ENCODE measurements at regions of chr5 and their contacts with region 1.

Region 1: GRCh38 chr5:59810041-59810440 is 83.5 kb downstream of the PDE4D start:
- DNase-seq: peak; percentile 63 to 77 (median 76)
- ATAC-seq: peak; percentile 79
- H3K4me3 ChIP-seq: no peak overlapping the region
- H3K4me1 ChIP-seq: peaks cover 3% of the 10 kb centered on the region
- CTCF ChIP-seq: peak; percentile 80

Region 2: GRCh38 chr5:59693492-59694309 is 116.3 kb before region 1 on chr5:
- intact Hi-C with region 1: no loop called
- DNase-seq: no peak
- ATAC-seq: no peak
- H3K4me3 ChIP-seq: no peak overlapping the region
- H3K4me1 ChIP-seq: no peaks in the 10 kb centered on the region
- CTCF ChIP-seq: no peak

Region 3: GRCh38 chr5:59887274-59887673 is 77.2 kb after region 1 on chr5:
- intact Hi-C with region 1: no loop called
- DNase-seq: no peak
- ATAC-seq: no peak
- H3K4me3 ChIP-seq: no peak overlapping the region
- H3K4me1 ChIP-seq: no peaks in the 10 kb centered on the region
- CTCF ChIP-seq: no peak

Region 4: GRCh38 chr5:60586307-60586901 is 776.4 kb after region 1 on chr5:
- intact Hi-C with region 1: loop called in 1 of 2 experiments (anchors 5 kb)
- DNase-seq: peak in 1 of 3 donors; percentile 4
- ATAC-seq: no peak
- H3K4me3 ChIP-seq: no peak overlapping the region
- H3K4me1 ChIP-seq: no peaks in the 10 kb centered on the region
- CTCF ChIP-seq: no peak

Region 5: GRCh38 chr5:60668686-60669304 is 858.8 kb after region 1 on chr5:
- intact Hi-C with region 1: loop called (anchors 5 to 10 kb)
- DNase-seq: no peak
- ATAC-seq: no peak
- H3K4me3 ChIP-seq: no peak overlapping the region
- H3K4me1 ChIP-seq: peaks cover 23% of the 10 kb centered on the region
- CTCF ChIP-seq: no peak

Region 6: DNA sequence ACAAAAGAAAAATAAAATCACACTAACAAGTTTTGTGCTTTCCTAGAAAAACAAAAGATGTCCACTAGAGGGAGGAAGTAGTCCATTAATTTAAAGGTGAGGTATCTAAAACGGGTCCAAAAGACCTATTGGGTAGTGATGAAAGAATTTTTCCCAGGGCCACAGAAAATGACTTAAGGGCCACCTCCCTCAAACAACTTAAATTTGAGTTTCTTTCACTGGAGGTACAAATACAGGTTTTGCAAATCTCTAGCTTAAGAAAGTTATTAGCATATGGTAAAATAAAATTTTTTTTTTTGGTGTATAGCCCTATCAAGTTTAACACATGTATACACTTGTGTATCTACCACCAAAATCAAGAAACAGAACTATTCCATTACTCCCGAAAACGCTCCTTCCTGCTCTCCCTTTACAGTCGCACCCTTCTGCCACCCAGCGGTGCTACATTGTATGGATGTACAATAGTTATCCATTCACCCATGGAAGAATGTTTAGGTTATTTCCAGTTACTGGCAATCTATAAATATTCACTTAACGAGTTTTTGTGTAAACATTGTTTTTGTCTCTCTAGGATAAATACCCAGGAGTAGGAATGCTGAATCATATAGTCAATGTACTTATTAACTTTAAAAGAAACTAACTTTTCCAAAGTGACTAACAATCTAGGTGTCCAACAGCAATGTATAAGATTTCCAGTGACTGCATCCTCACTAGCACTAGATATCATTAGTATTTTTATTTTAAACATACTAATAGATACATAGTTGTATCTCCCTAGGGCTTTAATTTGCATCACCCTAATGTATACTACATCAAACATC is 868.0 kb after region 1 on chr5:
- intact Hi-C with region 1: loop called in 1 of 2 experiments (anchors 10 kb)
- DNase-seq: peak in 1 of 3 donors; percentile 79
- ATAC-seq: peak; percentile 68
- H3K4me3 ChIP-seq: no peak overlapping the region
- H3K4me1 ChIP-seq: peaks cover 14% of the 10 kb centered on the region
- CTCF ChIP-seq: no peak

Measured in mucosa of descending colon (tissue), 3 donors.